ENCODE measurements at regions of chr4 and their contacts with region 1.

Region 1: GRCh38 chr4:125314676-125315575 is at the start of gene FAT4:
- DNase-seq: peak; percentile 97
- ATAC-seq: peak; percentile 91
- H3K4me3 ChIP-seq: peak within 1 kb of the TSS; percentile 57
- H3K27ac ChIP-seq: peak within 1 kb of the TSS; percentile 85
- H3K4me1 ChIP-seq: peaks cover 11% of the 10 kb centered on the region
- H3K27me3 ChIP-seq: no peaks in the 10 kb centered on the region
- CTCF ChIP-seq: no peak
- POLR2A ChIP-seq: no peak; the same call in 1 of the 2 replicates
- RAD21 ChIP-seq: no peak
- total RNA-seq, gene FAT4: 35.6 and 37.5 TPM in 2 replicates

Region 2: GRCh38 chr4:125368671-125369081 is 53.8 kb after region 1 on chr4:
- CTCF ChIA-PET with region 1: interaction called, 4 read pairs
- POLR2A ChIA-PET with region 1: no interaction called
- dilution Hi-C with region 1: no loop called
- in situ Hi-C with region 1: no loop called
- intact Hi-C with region 1: loop called (anchors 5 kb)
- DNase-seq: peak; percentile 84
- ATAC-seq: peak; percentile 76
- H3K4me3 ChIP-seq: peak overlapping the region; percentile 60
- H3K27ac ChIP-seq: peak overlapping the region; percentile 88; the same call in 1 of the 2 replicates
- H3K4me1 ChIP-seq: peaks cover 5% of the 10 kb centered on the region
- H3K27me3 ChIP-seq: no peaks in the 10 kb centered on the region
- CTCF ChIP-seq: no peak
- POLR2A ChIP-seq: no peak
- RAD21 ChIP-seq: no peak

Region 3: DNA sequence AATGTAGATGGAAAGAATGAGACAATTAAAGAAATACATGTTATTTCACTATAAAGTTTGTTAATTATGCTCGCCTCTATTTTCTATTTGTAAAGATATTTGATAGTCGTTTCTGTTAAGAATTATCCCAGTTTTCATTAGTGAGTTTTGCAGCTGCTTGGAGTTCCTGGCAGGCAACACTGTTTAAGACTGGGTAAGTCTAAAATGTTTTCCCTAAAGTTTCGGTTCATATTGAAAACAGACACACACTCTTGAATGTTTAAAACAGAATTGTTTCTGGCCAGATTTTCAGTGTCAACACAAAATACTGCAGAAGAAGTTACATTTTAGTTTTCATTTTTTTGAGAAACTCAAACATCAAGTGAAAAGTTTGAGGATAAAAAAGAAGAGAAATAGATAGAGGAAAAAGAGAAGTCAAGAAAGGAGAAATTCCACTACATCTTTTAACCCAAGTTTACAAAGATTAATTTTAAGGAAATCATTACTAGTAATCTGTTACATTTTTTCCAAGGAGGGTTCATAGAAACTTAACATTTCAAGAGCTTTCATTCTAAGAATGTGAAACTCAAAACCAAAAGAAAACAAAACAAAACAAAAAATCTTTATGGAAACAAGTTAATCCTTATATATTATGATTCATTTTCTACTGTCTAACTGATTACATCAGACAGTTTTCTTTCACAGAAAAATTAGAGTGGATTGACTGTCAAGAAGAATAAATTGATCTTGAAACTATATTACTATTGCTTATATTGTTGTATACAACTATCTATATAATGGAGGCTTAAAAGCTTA is 305.3 kb after region 1 on chr4:
- CTCF ChIA-PET with region 1: interaction called, 3 read pairs
- POLR2A ChIA-PET with region 1: no interaction called
- dilution Hi-C with region 1: no loop called
- in situ Hi-C with region 1: no loop called
- intact Hi-C with region 1: loop called (anchors 10 kb)
- DNase-seq: peak; percentile 19
- ATAC-seq: peak; percentile 64
- H3K4me3 ChIP-seq: no peak overlapping the region
- H3K27ac ChIP-seq: no peak overlapping the region
- H3K4me1 ChIP-seq: peaks cover 3% of the 10 kb centered on the region; the same call in 1 of the 2 replicates
- H3K27me3 ChIP-seq: no peaks in the 10 kb centered on the region
- CTCF ChIP-seq: no peak
- POLR2A ChIP-seq: no peak
- RAD21 ChIP-seq: no peak

Region 4: GRCh38 chr4:125741825-125742452 is 427.0 kb after region 1 on chr4:
- CTCF ChIA-PET with region 1: no interaction called
- POLR2A ChIA-PET with region 1: no interaction called
- dilution Hi-C with region 1: no loop called
- in situ Hi-C with region 1: loop called (anchors 5 kb)
- intact Hi-C with region 1: loop called (anchors 2 kb)
- DNase-seq: peak; percentile 43
- ATAC-seq: peak; percentile 75
- H3K4me3 ChIP-seq: no peak overlapping the region
- H3K27ac ChIP-seq: no peak overlapping the region
- H3K4me1 ChIP-seq: peaks cover 1% of the 10 kb centered on the region; the same call in 1 of the 2 replicates
- H3K27me3 ChIP-seq: no peaks in the 10 kb centered on the region
- CTCF ChIP-seq: peak; percentile 61
- POLR2A ChIP-seq: no peak
- RAD21 ChIP-seq: peak; percentile 59

Region 5: GRCh38 chr4:125979950-125980349 is 665.0 kb after region 1 on chr4:
- CTCF ChIA-PET with region 1: no interaction called
- POLR2A ChIA-PET with region 1: no interaction called
- dilution Hi-C with region 1: no loop called
- in situ Hi-C with region 1: no loop called
- intact Hi-C with region 1: loop called (anchors 5 kb)
- DNase-seq: no peak
- ATAC-seq: no peak
- H3K4me3 ChIP-seq: no peak overlapping the region
- H3K27ac ChIP-seq: no peak overlapping the region
- H3K4me1 ChIP-seq: no peaks in the 10 kb centered on the region
- H3K27me3 ChIP-seq: no peaks in the 10 kb centered on the region
- CTCF ChIP-seq: no peak
- POLR2A ChIP-seq: no peak
- RAD21 ChIP-seq: no peak

Region 6: GRCh38 chr4:126242679-126243390 is 927.9 kb after region 1 on chr4:
- CTCF ChIA-PET with region 1: no interaction called
- POLR2A ChIA-PET with region 1: no interaction called
- dilution Hi-C with region 1: no loop called
- in situ Hi-C with region 1: loop called (anchors 25 kb)
- intact Hi-C with region 1: no loop called
- DNase-seq: no peak
- ATAC-seq: no peak
- H3K4me3 ChIP-seq: no peak overlapping the region
- H3K27ac ChIP-seq: no peak overlapping the region
- H3K4me1 ChIP-seq: no peaks in the 10 kb centered on the region
- H3K27me3 ChIP-seq: no peaks in the 10 kb centered on the region
- CTCF ChIP-seq: no peak
- POLR2A ChIP-seq: no peak
- RAD21 ChIP-seq: no peak